ENCODE measurements at regions of chr10 and their contacts with region 1.

Region 1: DNA sequence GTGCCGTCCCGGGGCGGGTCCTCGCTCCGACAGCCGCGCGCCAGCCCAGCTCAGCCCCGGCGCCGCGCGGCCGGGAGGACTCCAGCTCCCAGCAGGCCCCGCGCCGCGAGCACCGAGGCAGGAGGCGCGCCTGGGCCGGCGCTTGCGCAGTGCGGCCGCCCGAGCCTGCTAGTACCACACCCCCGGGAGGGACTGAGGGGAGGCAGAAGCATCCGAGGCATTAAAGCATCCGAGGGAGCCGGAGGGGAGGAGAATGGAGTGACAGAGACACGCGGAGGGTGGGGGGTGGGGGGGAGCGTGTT is at the start of gene GRK5:
- DNase-seq: peak; percentile 97
- H3K4me3 Mint-ChIP-seq: peak within 1 kb of the TSS; percentile 98
- H3K27ac Mint-ChIP-seq: peak within 1 kb of the TSS; percentile 100
- H3K4me1 Mint-ChIP-seq: peaks cover 41% of the 10 kb centered on the region
- H3K27me3 Mint-ChIP-seq: no peaks in the 10 kb centered on the region
- total RNA-seq, gene GRK5: 24.4 and 24.7 TPM in 2 replicates

Region 2: GRCh38 chr10:119131512-119132240 is 75.6 kb before region 1 on chr10:
- intact Hi-C with region 1: loop called (anchors 2 kb)
- DNase-seq: peak; percentile 60
- H3K4me3 Mint-ChIP-seq: peak overlapping the region; percentile 82
- H3K27ac Mint-ChIP-seq: peak overlapping the region; percentile 94
- H3K4me1 Mint-ChIP-seq: peaks cover 62% of the 10 kb centered on the region
- H3K27me3 Mint-ChIP-seq: no peaks in the 10 kb centered on the region

Region 3: DNA sequence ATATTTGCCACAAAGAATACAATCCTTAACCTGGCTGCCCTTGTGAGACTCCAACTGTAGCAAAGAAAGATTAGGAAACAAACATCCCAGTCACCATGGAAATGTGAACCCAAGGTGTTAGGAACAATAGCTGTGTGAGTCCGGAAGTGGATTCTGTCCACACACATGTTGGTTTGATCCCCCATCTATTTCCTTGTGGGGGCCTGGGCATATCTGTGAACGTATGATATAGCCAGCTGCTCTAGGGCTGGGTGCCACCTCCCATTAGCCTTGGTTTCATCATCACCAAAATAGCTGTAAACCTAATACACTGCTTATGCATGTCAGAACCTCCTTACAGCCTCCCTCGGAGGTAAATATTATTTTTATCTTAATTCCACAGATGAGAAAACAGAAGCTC is 26.5 kb after region 1 on chr10:
- intact Hi-C with region 1: loop called (anchors 2 kb)
- DNase-seq: no peak
- H3K4me3 Mint-ChIP-seq: no peak overlapping the region
- H3K27ac Mint-ChIP-seq: peak overlapping the region; percentile 73
- H3K4me1 Mint-ChIP-seq: peaks cover 52% of the 10 kb centered on the region
- H3K27me3 Mint-ChIP-seq: no peaks in the 10 kb centered on the region

Region 4: DNA sequence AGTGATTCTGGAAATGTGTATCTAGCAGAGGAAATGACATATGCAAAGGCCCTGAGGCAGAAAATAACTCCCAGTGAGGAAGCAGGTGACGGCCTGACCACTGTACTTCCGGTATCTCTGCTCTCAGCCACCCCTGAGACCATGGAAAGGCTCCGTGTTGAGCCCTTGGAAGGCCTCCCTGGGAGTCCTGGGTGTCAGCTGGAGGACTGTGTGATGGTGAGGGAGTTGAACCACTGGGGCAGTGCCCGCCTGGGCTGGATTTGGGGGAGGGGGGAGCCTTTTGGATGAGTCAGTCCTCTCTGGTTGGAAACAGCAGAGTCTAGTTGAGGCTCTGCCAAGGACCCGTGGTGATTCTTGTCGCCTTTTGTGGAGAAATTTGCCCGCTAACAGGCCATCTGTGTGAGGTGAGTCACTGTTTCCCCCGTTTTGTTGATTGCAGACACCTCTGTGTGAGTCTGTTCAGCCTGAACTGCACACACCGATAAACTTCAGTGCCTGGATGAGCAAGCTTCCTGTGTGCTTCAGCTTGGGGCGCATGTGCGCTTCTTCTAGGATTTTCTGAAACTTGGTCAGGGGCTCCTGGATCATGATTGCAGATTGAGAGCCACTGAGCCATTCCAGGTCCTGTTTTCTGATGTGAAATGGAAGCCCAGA is 98.7 kb after region 1 on chr10:
- intact Hi-C with region 1: loop called (anchors 1 kb)
- DNase-seq: peak; percentile 85
- H3K4me3 Mint-ChIP-seq: peak overlapping the region; percentile 74
- H3K27ac Mint-ChIP-seq: peak overlapping the region; percentile 100
- H3K4me1 Mint-ChIP-seq: peaks cover 70% of the 10 kb centered on the region
- H3K27me3 Mint-ChIP-seq: peaks cover 4% of the 10 kb centered on the region

Region 5: GRCh38 chr10:119445311-119445934 is 238.1 kb after region 1 on chr10:
- intact Hi-C with region 1: loop called (anchors 1 kb)
- DNase-seq: peak; percentile 69
- H3K4me3 Mint-ChIP-seq: no peak overlapping the region
- H3K27ac Mint-ChIP-seq: no peak overlapping the region
- H3K4me1 Mint-ChIP-seq: peaks cover 2% of the 10 kb centered on the region
- H3K27me3 Mint-ChIP-seq: no peaks in the 10 kb centered on the region

Region 6: DNA sequence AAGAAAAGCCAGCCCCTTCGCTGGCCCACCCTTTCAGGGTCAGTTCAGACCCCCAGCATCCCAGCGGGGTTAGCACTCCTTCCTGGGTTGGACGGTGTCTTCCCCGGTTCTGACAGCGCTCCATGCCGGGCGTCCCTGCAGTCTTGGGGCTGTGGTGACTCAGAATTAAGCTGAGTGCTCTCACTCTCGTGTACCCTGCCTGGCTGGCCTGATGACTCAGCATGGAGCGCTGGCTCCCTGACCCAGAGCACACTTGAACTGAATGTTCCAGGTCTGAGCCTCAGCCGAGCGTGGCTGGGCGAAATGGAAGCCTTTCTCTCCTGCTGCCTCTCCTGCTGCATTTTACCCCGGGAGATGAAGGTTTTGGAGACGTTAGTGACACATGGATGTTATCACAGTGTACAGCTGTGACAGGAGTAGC is 450.9 kb after region 1 on chr10:
- intact Hi-C with region 1: loop called (anchors 5 kb)
- DNase-seq: no peak
- H3K4me3 Mint-ChIP-seq: no peak overlapping the region
- H3K27ac Mint-ChIP-seq: no peak overlapping the region
- H3K4me1 Mint-ChIP-seq: peaks cover 61% of the 10 kb centered on the region
- H3K27me3 Mint-ChIP-seq: no peaks in the 10 kb centered on the region

Region 7: GRCh38 chr10:119849031-119849789 is 641.9 kb after region 1 on chr10:
- intact Hi-C with region 1: no loop called
- DNase-seq: no peak
- H3K4me3 Mint-ChIP-seq: no peak overlapping the region
- H3K27ac Mint-ChIP-seq: no peak overlapping the region
- H3K4me1 Mint-ChIP-seq: no peaks in the 10 kb centered on the region
- H3K27me3 Mint-ChIP-seq: no peaks in the 10 kb centered on the region